Common myeloid progenitor, CD34-positive (primary cell): ENCODE measurements at regions of chr16 and their contacts with region 1.

Region 1: DNA sequence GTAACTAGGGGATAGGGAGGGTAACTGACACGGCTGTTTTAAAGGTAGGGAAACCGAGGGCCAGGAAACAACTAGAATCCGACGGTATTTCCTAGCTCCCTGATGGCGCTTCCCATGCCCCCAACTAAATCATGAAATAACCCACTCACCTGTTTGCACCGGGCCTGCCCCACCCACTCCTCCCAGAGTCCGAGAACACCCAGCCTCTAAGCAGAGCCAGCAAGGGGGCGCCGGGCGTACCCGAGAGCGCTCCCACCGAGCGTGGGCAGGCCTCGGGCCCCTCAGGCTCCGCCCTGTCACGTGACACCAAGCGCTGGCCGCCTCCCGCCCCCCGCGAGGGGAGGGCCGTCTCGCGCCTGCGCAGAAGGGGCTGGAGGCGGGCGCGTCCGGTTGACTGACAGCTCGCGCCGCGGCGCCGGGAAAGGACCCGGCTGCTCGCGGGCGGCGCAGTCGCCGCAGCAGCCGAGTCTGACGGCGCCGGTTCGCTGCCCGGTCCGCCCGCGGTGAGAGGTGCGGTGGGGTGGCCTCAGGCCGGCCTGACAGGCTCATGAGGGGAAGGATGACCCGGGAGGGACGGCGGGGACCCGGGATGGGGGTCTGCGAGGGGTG is at the start of gene KIAA0513:
- DNase-seq: peak; percentile 91 to 95 (median 93)
- H3K4me3 ChIP-seq: peak within 1 kb of the TSS; percentile 46 to 88 (median 71)
- H3K27ac ChIP-seq: peak within 1 kb of the TSS; percentile 33 to 70
- H3K4me1 ChIP-seq: peaks cover 23 to 50% (median 40%) of the 10 kb centered on the region in 4 experiments
- H3K27me3 ChIP-seq: peaks cover 0 to 20% (median 4%) of the 10 kb centered on the region in 5 experiments

Region 2: DNA sequence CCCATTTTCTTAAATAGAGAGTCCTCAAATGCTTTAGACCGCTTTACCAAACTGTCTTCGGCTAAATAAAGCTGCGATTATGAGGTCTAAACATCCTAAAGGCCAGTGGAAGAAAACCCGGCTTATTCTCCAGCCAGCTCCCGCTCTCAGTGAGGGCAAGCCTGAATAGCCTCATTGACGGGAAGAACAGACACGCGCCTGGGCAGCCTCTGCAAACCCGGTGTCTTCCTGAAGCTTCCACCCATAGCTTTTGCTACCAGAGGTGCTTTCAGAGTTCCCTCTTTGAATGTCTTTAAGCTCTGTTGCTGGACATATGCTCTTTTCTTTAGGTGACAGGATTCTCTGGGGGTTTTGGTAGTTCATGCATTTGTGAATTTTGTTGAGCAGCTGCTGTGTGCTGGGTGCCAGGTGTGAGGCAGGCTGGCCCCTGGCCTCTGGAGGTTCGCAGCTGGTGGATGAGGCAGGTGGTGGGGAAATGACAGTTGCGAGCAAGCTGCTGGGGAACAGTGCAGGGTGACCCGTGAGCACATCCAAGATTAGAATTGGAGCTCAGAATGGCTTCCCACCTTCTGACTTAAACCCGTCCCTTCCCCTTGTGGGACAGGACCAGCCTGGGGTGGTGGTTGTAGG is 163.0 kb before region 1 on chr16:
- CTCF ChIA-PET with region 1: no interaction called
- POLR2A ChIA-PET with region 1: no interaction called
- DNase-seq: no peak
- H3K4me3 ChIP-seq: no peak overlapping the region
- H3K27ac ChIP-seq: no peak overlapping the region
- H3K4me1 ChIP-seq: no peaks in the 10 kb centered on the region
- H3K27me3 ChIP-seq: peaks cover 0 to 15% (median 1%) of the 10 kb centered on the region in 5 experiments

Region 3: DNA sequence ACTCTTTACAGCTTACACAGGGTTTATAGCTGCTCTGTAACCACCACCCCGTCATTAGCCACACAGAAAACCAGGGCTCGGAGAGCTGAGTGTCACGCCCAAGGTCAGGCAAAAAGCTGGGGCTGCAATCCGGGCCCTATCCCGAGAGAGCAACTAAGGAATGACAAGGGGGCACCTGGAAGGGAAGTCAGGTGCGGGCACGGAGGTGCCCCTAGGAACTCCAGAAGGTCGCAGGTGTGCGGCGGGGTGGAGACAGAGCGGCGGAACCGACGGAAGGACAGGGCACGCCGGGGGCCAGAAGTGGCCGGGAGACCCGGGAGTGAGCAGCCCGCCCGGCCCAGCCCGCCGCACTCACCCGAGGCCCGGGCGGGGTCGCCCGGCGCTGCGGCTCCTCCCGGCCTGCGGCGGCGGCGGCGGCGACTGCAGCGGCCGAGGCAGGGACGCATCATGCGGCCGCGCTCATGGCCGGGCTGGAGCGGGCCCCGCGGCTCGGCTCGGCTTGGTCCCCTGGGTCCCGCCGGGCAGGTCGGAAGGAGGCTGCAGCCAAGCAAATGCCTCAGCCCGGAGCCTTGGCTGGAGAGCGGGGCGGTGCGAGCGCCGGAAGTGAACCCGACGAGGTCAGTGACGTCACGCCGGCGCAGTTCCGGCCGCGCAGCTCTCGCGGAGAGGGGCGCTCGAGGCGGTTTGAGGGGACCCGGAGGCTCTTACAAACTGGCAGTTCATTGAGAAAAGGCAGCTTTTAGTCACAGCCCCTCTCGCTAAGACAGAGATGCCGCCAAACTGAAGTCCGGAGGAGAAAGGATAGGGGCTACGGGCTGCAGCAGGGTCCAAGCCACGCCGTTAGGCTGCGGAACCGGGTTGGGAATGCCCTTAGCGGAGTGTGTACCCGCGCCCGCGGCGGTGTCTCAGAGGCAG is 16.3 kb before region 1 on chr16 and contains the start of gene ZDHHC7:
- CTCF ChIA-PET with region 1: interaction called, 11 read pairs
- POLR2A ChIA-PET with region 1: interaction called, 3 read pairs
- DNase-seq: peak; percentile 90 to 94 (median 92)
- H3K4me3 ChIP-seq: peak within 1 kb of the TSS; percentile 83 to 95 (median 89)
- H3K27ac ChIP-seq: peak within 1 kb of the TSS; percentile 96 to 99
- H3K4me1 ChIP-seq: peaks cover 4 to 28% (median 16%) of the 10 kb centered on the region in 4 experiments
- H3K27me3 ChIP-seq: no peaks in the 10 kb centered on the region

Region 4: DNA sequence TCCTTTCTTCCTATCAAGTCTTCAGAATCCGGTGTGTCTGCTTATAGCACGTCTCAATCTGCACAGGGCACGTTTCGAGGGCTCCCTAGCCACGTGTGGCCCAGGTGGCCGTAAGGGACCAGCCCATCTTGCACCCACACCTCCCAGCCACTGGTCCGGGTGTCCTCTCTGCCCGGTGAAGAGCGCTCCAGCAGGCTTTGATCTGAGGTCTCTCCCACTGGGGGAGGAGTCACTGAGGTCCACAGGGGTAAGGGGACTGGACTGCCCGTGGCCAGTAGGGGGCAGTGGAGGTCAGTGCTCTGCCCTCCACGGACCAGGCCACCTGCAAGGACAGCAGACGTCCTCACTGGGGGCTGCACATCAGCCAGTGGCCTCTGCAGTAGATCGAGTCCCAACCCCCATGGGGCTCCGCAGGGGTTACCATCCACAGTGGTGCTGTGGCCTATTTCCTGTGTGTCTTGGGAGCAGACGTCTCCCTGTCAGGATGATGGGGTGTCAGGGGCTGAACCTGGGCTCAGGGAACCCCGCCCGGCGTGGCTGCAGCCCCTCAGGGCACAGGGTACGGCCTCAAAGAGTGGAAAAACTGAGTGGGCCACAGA is 289.0 kb after region 1 on chr16:
- CTCF ChIA-PET with region 1: no interaction called
- POLR2A ChIA-PET with region 1: no interaction called
- DNase-seq: peak; percentile 70 to 84 (median 80)
- H3K4me3 ChIP-seq: no peak overlapping the region
- H3K27ac ChIP-seq: no peak overlapping the region
- H3K4me1 ChIP-seq: peaks cover 3 to 54% (median 42%) of the 10 kb centered on the region in 4 experiments
- H3K27me3 ChIP-seq: no peaks in the 10 kb centered on the region